ENCODE measurements at regions of chr10 and their contacts with region 1.

Region 1: DNA sequence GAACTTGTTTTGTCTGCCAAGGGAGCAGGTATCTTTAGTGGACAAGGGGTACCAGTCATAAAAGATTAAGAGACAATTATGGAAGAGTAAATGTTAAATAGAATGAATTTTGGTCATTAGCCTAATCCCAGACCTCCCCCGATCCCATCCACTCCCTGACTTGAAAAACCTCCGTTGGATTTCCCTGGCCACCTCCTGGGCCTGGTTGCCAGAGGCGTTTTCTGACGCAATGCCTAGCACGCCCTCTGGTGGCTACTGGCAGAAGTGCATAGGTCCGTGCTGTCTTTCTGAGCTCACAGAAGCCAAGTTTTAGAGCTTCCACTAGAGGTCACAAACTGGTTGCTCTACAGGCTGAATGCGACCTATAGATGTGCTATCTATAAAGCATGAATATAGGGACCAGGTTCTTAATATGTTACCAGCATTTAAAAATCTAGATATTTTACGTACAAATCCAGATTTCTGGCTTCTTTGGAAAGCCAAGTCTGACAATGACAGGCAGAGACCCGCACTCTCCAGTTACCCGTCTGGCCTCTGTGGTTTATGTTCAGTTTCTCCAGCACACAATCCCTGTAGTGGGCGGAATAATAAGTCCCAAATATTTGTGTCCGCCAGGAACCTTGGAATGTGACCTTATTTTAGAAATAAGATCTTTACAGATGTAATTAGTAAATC is 39.8 kb downstream of the SPOCK2 start:
- DNase-seq: peak; percentile 77 to 92 (median 86)
- ATAC-seq: peak; percentile 98 to 99
- H3K4me3 Mint-ChIP-seq: no peak overlapping the region
- H3K27ac Mint-ChIP-seq: peak overlapping the region in 6 of 10 donors; percentile 8 to 61 (median 33)
- H3K4me1 Mint-ChIP-seq: peaks cover 5 to 16% (median 7%) of the 10 kb centered on the region in 4 donors
- H3K27me3 Mint-ChIP-seq: no peaks in the 10 kb centered on the region

Region 2: DNA sequence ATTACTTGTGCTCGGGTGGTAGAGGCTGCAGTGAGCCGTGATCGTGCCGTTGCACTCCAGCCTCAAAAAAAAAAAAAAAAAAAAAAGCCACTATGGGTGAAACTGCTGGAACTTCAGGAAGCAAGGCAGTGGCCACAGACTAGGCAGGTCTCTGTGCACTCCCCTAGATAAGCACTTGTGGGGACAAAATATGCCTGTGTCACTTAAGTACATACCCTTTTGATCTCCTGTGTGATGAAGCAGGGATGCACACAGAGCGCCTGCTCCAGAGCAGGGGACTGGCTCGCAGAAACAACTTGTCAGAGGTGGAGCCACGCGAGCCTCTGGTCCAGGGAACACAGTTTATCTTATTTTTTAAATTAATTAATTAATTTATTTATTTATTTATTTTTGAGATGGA is 154.7 kb before region 1 on chr10:
- POLR2A ChIA-PET with region 1: interaction called, 15 read pairs
- DNase-seq: no peak
- ATAC-seq: no peak
- H3K4me3 Mint-ChIP-seq: no peak overlapping the region
- H3K27ac Mint-ChIP-seq: no peak overlapping the region
- H3K4me1 Mint-ChIP-seq: peaks cover 6 to 18% (median 16%) of the 10 kb centered on the region in 4 donors
- H3K27me3 Mint-ChIP-seq: peaks cover 0 to 5% (median 2%) of the 10 kb centered on the region in 5 donors

Region 3: DNA sequence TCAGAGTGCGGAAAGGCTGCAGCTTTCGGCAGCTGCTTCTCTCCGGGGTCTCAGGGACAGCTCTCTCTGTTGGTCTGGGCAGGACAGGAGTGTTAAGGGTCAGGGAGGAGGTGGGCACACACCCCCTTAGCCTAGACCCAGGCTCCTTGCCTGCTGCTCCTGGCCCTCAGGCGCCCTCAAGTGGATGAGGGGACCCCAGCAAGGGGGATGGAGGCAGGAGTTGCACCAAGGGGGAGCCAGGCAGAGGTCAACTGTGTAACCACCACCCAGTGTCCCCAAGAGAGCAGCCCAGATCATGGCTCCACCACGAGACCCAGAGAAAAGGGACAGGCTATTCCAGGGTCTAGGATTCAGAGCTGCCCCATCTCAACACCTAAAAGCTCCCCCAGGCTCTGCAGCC is 12.9 kb after region 1 on chr10:
- POLR2A ChIA-PET with region 1: interaction called, 13 read pairs
- DNase-seq: peak in 2 of 10 donors; percentile 9 to 38
- ATAC-seq: peak; percentile 12 to 22
- H3K4me3 Mint-ChIP-seq: peak overlapping the region in 6 of 10 donors; percentile 23 to 75 (median 39)
- H3K27ac Mint-ChIP-seq: peak overlapping the region; percentile 76 to 98 (median 83)
- H3K4me1 Mint-ChIP-seq: peaks cover 34 to 68% (median 44%) of the 10 kb centered on the region in 4 donors
- H3K27me3 Mint-ChIP-seq: no peaks in the 10 kb centered on the region

Region 4: DNA sequence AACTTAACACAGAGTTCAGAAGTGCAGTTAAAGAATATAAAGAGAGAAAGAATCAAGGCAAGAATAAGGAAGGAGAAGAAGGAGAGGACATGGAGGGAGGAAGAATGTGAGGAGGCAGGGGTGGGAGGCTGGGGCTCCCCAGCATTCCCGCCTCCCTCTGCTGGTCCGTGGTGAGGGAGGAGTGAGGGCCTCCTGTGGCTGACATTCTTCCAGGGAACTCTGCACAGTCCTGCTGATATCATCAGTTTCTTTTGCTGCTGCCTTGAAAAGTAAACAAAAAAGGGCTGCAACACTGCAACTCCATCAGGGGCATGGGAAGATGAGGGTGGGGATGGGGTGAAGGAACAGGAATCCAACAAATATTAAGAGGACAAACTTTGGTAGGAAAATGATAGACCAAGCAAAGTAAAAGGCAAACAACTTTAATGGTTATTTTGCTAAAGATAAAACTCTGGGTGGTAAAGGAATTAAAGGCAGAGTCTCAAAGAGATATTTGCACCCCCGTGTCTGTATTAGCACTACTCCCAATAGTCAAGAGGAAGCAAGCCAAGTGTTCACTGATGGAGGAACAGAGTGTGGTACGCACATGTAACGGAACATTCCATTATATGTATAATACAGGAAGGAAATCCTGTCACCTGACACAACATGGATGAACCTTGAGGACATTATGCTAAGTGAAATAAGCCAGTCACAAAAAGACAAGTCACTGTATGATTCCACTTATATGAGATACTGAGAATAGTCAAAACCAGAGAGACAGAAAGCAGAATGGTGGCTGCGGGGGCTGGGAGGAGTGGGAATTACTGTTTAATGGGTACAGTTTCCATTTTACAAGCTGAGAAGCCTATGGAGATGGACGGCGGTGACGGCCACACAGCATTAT is 47.8 kb after region 1 on chr10:
- POLR2A ChIA-PET with region 1: no interaction called
- DNase-seq: no peak
- ATAC-seq: no peak
- H3K4me3 Mint-ChIP-seq: no peak overlapping the region
- H3K27ac Mint-ChIP-seq: peak overlapping the region in 4 of 10 donors; percentile 16 to 62 (median 39)
- H3K4me1 Mint-ChIP-seq: peaks cover 15 to 41% (median 30%) of the 10 kb centered on the region in 4 donors
- H3K27me3 Mint-ChIP-seq: no peaks in the 10 kb centered on the region

Region 5: GRCh38 chr10:72248468-72249151 is 200.0 kb after region 1 on chr10:
- POLR2A ChIA-PET with region 1: no interaction called
- DNase-seq: peak; percentile 46 to 92 (median 81)
- ATAC-seq: peak; percentile 82 to 86
- H3K4me3 Mint-ChIP-seq: peak overlapping the region; percentile 70 to 91 (median 86)
- H3K27ac Mint-ChIP-seq: peak overlapping the region; percentile 93 to 99 (median 98)
- H3K4me1 Mint-ChIP-seq: peaks cover 49 to 95% (median 90%) of the 10 kb centered on the region in 4 donors
- H3K27me3 Mint-ChIP-seq: no peaks in the 10 kb centered on the region